ENCODE measurements at regions of chr1 and their contacts with region 1.

Region 1: GRCh38 chr1:150561974-150562445 is 12.8 kb downstream of the ADAMTSL4 start:
- DNase-seq: peak; percentile 94
- ATAC-seq: peak; percentile 54 to 63
- H3K4me3 ChIP-seq: peak overlapping the region; percentile 68 to 75 (median 71)
- H3K27ac ChIP-seq: peak overlapping the region; percentile 100
- H3K4me1 ChIP-seq: peaks cover 69 to 70% of the 10 kb centered on the region in 2 donors
- H3K27me3 ChIP-seq: no peaks in the 10 kb centered on the region
- CTCF ChIP-seq: no peak
- POLR2A ChIP-seq: no peak

Region 2: GRCh38 chr1:150464422-150464826 is 97.6 kb before region 1 on chr1:
- in situ Hi-C with region 1: no loop called
- intact Hi-C with region 1: loop called (anchors 1 kb)
- DNase-seq: peak; percentile 25 to 54
- ATAC-seq: peak; percentile 48 to 73
- H3K4me3 ChIP-seq: no peak overlapping the region
- H3K27ac ChIP-seq: peak overlapping the region in 1 of 4 donors; percentile 37
- H3K4me1 ChIP-seq: peaks cover 0 to 9% of the 10 kb centered on the region in 2 donors
- H3K27me3 ChIP-seq: no peaks in the 10 kb centered on the region
- CTCF ChIP-seq: peak; percentile 79 to 85 (median 81)
- POLR2A ChIP-seq: no peak

Region 3: GRCh38 chr1:150537732-150538684 is 24.0 kb before region 1 on chr1:
- in situ Hi-C with region 1: no loop called
- intact Hi-C with region 1: loop called (anchors 2 kb)
- DNase-seq: no peak
- ATAC-seq: no peak
- H3K4me3 ChIP-seq: no peak overlapping the region
- H3K27ac ChIP-seq: no peak overlapping the region
- H3K4me1 ChIP-seq: peaks cover 9 to 15% of the 10 kb centered on the region in 2 donors
- H3K27me3 ChIP-seq: no peaks in the 10 kb centered on the region
- CTCF ChIP-seq: no peak
- POLR2A ChIP-seq: no peak

Region 4: DNA sequence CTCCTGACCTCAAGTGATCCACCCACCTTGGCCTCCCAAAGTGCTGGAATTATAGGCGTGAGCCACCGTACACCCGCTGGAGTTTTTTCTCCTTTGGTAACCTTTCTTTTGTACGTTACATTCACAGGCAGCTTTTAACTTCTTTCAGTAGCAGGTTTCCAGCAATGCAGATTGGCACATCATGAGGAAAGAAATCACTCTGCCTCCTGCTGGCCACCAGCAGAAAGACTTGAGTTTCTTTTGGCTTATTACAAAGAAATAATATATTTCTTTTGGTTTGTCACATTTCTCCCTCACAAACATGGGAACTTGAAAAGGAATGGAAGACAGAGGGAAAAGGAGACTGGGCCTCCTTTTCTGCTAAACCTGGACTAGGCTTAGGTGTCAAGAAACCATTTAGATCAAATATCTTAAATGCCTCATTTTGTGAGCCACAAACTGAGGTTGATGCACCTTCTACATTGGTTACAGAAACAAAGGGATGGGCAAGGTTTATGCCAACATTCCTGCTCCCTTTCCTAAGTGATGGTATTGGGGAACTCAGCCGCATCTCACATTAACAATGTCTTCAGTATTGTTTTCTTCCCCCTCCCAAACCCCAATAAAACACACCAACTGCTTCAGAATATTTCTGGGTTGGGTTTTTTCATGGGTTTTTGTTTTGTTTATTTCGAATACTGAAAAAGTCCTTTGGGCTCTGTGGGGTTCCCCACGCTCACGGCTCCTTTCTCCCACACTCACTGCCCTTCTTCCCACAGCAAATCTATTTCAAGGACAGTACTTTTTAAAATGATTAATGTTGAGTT is 59.7 kb after region 1 on chr1:
- in situ Hi-C with region 1: loop called (anchors 5 to 10 kb)
- intact Hi-C with region 1: loop called (anchors 1 kb)
- DNase-seq: peak; percentile 29 to 56
- ATAC-seq: peak; percentile 52 to 70
- H3K4me3 ChIP-seq: no peak overlapping the region
- H3K27ac ChIP-seq: peak overlapping the region; percentile 70 to 79 (median 75)
- H3K4me1 ChIP-seq: peaks cover 40% of the 10 kb centered on the region in 2 donors
- H3K27me3 ChIP-seq: no peaks in the 10 kb centered on the region
- CTCF ChIP-seq: peak; percentile 66 to 78 (median 73)
- POLR2A ChIP-seq: no peak

Region 5: GRCh38 chr1:150696590-150697524 is 134.8 kb after region 1 on chr1 and contains the start of gene GOLPH3L:
- in situ Hi-C with region 1: no loop called
- intact Hi-C with region 1: loop called (anchors 2 kb)
- DNase-seq: peak; percentile 97 to 98
- ATAC-seq: peak; percentile 100
- H3K4me3 ChIP-seq: peak within 1 kb of the TSS; percentile 77 to 82 (median 80)
- H3K27ac ChIP-seq: peak within 1 kb of the TSS; percentile 76 to 89 (median 83)
- H3K4me1 ChIP-seq: peaks cover 9 to 18% of the 10 kb centered on the region in 2 donors
- H3K27me3 ChIP-seq: no peaks in the 10 kb centered on the region
- CTCF ChIP-seq: peak in 1 of 5 experiments; percentile 15
- POLR2A ChIP-seq: peak; percentile 32 to 58
- total RNA-seq, gene GOLPH3L: 9.8 to 18.6 (median 15.7) TPM

Region 6: DNA sequence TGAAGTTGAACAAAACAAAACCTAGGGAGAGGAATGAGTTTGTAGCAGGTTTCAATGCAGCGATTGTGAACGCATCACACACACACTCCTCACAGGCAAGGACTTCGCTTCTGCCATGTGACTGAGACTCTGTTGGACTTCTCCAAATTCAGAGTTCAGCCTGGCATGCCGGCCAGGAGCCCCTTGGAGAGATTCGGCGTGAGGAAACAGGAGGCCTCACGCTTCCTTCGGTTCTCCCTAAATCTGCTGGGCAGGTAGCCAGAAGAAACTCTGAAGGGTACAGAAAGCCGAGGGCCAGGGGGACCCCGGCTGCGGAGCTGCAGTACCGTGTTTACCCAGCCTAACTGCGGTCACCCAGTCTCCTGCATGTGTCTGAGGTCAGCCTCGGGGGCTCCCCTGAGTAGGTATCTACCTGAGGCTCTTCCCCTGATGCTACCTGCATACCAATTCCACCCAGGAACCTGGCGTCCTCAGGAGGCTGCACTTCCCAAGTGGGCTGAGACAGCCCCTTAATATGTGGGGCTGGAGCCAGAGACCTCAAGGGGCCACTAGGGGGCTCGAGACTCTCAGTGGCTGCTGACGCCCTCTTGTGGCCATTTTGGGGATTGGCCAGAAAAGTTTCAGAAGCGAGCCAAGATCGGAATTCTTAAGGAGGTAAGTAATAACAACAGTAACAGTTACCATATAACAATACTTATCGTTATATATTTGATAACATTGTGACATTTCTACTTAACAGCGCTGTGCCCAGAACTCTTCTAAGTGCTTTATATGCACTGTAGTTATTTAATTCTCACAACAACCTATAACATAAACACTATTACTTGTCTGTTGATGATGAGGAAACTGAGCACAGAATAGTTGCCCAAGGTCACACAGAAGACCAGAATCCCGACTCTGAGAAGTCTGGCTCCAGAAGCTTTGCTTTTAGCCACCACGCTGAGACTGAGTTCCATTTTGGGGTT is 417.4 kb after region 1 on chr1:
- in situ Hi-C with region 1: no loop called
- intact Hi-C with region 1: loop called (anchors 5 kb)
- DNase-seq: peak; percentile 65 to 84
- ATAC-seq: peak; percentile 45 to 55
- H3K4me3 ChIP-seq: peak overlapping the region in 1 of 4 donors; percentile 19
- H3K27ac ChIP-seq: peak overlapping the region; percentile 40 to 86 (median 47)
- H3K4me1 ChIP-seq: peaks cover 18 to 20% of the 10 kb centered on the region in 2 donors
- H3K27me3 ChIP-seq: no peaks in the 10 kb centered on the region
- CTCF ChIP-seq: peak; percentile 96 to 99 (median 98)
- POLR2A ChIP-seq: no peak

Region 7: GRCh38 chr1:151146412-151147140 is 584.6 kb after region 1 on chr1 and contains the start of gene SEMA6C:
- in situ Hi-C with region 1: no loop called
- intact Hi-C with region 1: loop called (anchors 5 kb)
- DNase-seq: peak; percentile 97 to 98
- ATAC-seq: peak; percentile 52 to 66
- H3K4me3 ChIP-seq: peak within 1 kb of the TSS; percentile 89 to 97 (median 92)
- H3K27ac ChIP-seq: peak within 1 kb of the TSS; percentile 95 to 99 (median 98)
- H3K4me1 ChIP-seq: peaks cover 40 to 48% of the 10 kb centered on the region in 2 donors
- H3K27me3 ChIP-seq: no peaks in the 10 kb centered on the region
- CTCF ChIP-seq: peak in 1 of 5 experiments; percentile 8
- POLR2A ChIP-seq: peak; percentile 97 to 98
- total RNA-seq, gene SEMA6C: 51.5 to 121 (median 108) TPM

Measured in gastrocnemius medialis (tissue), 4 donors.